ENCODE measurements at regions of chr20 and their contacts with region 1.

Region 1: DNA sequence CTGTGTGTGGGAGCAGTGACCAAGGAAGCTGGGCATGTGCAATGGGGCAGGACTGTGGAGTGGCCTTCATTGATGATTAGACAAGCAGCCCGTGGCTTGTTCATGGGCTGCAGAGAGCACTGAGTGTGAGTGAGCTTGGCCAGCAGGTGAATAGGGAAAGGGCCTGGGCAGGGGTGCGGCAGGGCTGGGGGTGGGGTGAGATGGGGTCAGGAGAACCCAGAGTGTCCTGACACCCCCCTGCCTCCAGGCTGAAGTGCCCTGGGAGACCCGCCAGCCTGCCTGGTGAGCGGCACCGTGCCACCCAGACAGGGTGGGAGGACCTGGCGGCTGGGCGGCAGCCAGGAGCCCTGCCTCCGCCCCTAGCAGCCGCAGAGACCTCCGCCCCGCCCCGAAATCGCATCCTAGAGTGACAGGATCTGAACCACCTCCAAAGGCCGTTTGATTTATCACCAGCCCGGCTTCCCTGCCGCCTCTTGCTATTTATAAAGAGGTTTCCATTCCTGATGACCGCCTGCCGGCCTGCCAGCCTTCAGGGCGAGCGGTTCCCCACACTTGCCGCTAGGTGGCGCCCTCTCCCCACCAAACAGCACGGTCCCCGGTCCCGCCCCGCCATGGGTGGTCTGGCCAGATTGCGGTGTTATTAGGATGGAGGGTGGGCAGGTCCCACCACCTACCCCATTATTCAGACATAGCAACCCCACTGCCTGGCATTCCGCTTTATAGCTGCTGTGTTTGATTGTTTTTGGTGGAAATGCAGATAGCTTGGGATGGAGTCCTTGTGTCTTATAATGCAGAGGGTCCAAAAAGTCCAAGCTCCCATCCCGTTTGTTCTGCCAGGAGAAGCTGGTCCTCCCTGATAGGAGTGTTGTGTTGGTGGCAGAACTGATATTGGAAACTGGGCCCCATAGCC is 3.5 kb downstream of the MYLK2 start:
- DNase-seq: peak; percentile 76 to 95
- H3K4me3 ChIP-seq: peak overlapping the region in 1 of 2 donors; percentile 1
- H3K27ac ChIP-seq: peak overlapping the region; percentile 46 to 80
- H3K4me1 ChIP-seq: peaks cover 0 to 56% (median 33%) of the 10 kb centered on the region in 4 donors
- H3K27me3 ChIP-seq: no peaks in the 10 kb centered on the region
- CTCF ChIP-seq: peak; percentile 94 to 99

Region 2: DNA sequence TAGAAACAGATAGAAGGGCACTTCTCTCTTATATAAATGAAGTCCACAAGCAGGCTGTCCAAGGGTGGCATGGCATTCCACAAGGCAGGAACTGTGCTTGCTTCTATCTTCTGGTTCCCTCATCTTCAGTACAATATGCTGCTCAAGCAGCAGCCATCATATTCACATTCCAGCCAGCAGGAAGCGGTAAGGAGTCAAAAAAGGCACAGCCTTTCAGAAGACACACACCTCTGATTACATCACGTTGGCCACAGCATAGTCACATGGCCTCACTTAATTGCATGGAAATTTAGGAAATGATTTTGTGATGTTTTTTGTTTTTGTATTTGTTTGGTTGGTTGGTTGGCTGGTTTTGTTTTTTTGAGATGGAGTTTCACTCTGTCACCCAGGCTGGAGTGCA is 328.5 kb before region 1 on chr20:
- intact Hi-C with region 1: no loop called
- DNase-seq: no peak
- H3K4me3 ChIP-seq: no peak overlapping the region
- H3K27ac ChIP-seq: no peak overlapping the region
- H3K4me1 ChIP-seq: peaks cover 0 to 29% (median 16%) of the 10 kb centered on the region in 4 donors
- H3K27me3 ChIP-seq: no peaks in the 10 kb centered on the region
- CTCF ChIP-seq: peak; percentile 18 to 24

Region 3: GRCh38 chr20:31661625-31662371 is 160.9 kb before region 1 on chr20:
- intact Hi-C with region 1: loop called (anchors 10 kb)
- DNase-seq: peak; percentile 75 to 88
- H3K4me3 ChIP-seq: peak overlapping the region; percentile 30 to 43
- H3K27ac ChIP-seq: peak overlapping the region; percentile 50 to 67
- H3K4me1 ChIP-seq: peaks cover 0 to 51% (median 35%) of the 10 kb centered on the region in 4 donors
- H3K27me3 ChIP-seq: no peaks in the 10 kb centered on the region
- CTCF ChIP-seq: peak; percentile 64 to 81

Region 4: DNA sequence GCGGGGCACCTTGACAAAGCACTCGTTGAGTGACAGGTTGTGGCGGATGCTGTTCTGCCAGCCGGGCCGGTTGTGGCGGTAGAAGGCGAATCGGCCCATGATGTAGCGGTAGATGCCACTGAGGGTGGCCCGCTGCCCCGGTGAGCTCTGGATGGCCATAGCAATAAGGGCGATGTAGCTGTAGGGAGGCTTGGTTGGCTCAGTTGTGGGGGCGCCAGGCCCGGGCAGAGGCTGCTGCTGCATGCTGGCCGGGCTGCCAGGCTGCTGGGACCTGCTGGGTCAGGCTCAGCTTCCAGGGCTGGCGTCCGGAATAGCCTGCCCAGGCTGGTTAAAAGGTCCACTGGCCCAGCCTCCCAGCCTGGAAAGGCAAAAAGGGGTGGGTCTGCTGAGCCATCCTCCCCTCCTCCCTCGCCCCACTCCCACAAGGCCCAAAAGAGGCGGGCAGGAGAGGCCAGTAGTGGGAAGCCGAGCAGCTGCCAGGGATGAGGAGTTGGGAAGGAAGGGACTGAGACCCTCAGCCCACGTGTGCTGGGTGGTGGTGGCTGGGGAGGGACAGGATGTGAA is 22.7 kb after region 1 on chr20 and contains the start of gene FOXS1:
- intact Hi-C with region 1: loop called (anchors 2 kb)
- DNase-seq: peak; percentile 74 to 95
- H3K4me3 ChIP-seq: peak within 1 kb of the TSS; percentile 62 to 73
- H3K27ac ChIP-seq: peak within 1 kb of the TSS; percentile 89 to 92
- H3K4me1 ChIP-seq: peaks cover 0 to 67% (median 49%) of the 10 kb centered on the region in 4 donors
- H3K27me3 ChIP-seq: peaks cover 0 to 12% of the 10 kb centered on the region in 2 donors
- CTCF ChIP-seq: no peak

Region 5: GRCh38 chr20:32031007-32031958 is 208.6 kb after region 1 on chr20:
- intact Hi-C with region 1: loop called (anchors 5 kb)
- DNase-seq: peak; percentile 74 to 84
- H3K4me3 ChIP-seq: peak overlapping the region in 1 of 2 donors; percentile 38
- H3K27ac ChIP-seq: no peak overlapping the region
- H3K4me1 ChIP-seq: peaks cover 0 to 11% (median 7%) of the 10 kb centered on the region in 4 donors
- H3K27me3 ChIP-seq: peaks cover 0 to 40% of the 10 kb centered on the region in 2 donors
- CTCF ChIP-seq: peak; percentile 71 to 85

Region 6: DNA sequence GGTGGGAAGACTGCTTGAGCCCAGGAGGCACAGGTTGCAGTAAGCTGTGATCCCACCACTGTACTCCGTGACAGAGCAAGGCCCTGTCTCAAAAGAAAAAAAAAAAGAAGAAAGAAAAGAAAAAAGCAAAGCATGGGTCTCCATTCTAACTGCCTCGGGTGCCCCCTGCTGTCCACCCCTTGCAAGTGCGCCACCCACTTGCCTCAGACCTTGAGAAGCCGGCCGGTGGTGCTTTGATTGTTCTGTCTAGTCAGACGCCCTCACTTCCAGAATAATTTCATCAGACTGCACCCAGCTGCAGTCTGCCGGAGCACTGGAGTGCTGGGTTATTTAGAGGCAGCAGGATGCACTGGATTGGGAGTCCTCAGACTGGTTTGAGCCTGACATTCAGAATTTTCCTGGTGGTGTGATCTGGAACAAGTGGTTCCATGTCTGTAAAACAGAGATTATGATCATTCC is 269.2 kb after region 1 on chr20:
- intact Hi-C with region 1: loop called (anchors 5 kb)
- DNase-seq: peak; percentile 81 to 83
- H3K4me3 ChIP-seq: no peak overlapping the region
- H3K27ac ChIP-seq: no peak overlapping the region
- H3K4me1 ChIP-seq: no peaks in the 10 kb centered on the region
- H3K27me3 ChIP-seq: peaks cover 0 to 4% of the 10 kb centered on the region in 2 donors
- CTCF ChIP-seq: peak; percentile 57 to 88